Ascending aorta (tissue), 2 donors: ENCODE measurements at regions of chr9 and their contacts with region 1.

Region 1: GRCh38 chr9:122264360-122265148 is at the starts of genes MRRF and RBM18:
- DNase-seq: peak; percentile 66 to 94
- H3K4me3 ChIP-seq: peak within 1 kb of the TSS; percentile 73 to 82
- H3K27ac ChIP-seq: peak within 1 kb of the TSS; percentile 85 to 91
- H3K4me1 ChIP-seq: peaks cover 5 to 24% of the 10 kb centered on the region in 2 donors
- H3K27me3 ChIP-seq: no peaks in the 10 kb centered on the region
- CTCF ChIP-seq: no peak
- total RNA-seq, gene MRRF: 16.1 TPM
- total RNA-seq, gene RBM18: 63.8 TPM

Region 2: GRCh38 chr9:120792898-120793765 is 1471.4 kb before region 1 on chr9 and contains the start of gene FBXW2:
- intact Hi-C with region 1: loop called (anchors 5 kb)
- DNase-seq: peak; percentile 56 to 95
- H3K4me3 ChIP-seq: peak within 1 kb of the TSS; percentile 98 to 99
- H3K27ac ChIP-seq: peak within 1 kb of the TSS; percentile 88 to 95
- H3K4me1 ChIP-seq: peaks cover 7 to 31% of the 10 kb centered on the region in 2 donors
- H3K27me3 ChIP-seq: no peaks in the 10 kb centered on the region
- CTCF ChIP-seq: peak in 1 of 3 experiments; percentile 4
- total RNA-seq, gene FBXW2: 35.5 TPM

Region 3: GRCh38 chr9:122092611-122093506 is 171.7 kb before region 1 on chr9 and contains the start of gene TTLL11:
- intact Hi-C with region 1: loop called (anchors 10 kb)
- DNase-seq: peak; percentile 92 to 99
- H3K4me3 ChIP-seq: peak within 1 kb of the TSS; percentile 92
- H3K27ac ChIP-seq: peak within 1 kb of the TSS; percentile 82 to 92
- H3K4me1 ChIP-seq: peaks cover 5 to 31% of the 10 kb centered on the region in 2 donors
- H3K27me3 ChIP-seq: no peaks in the 10 kb centered on the region
- CTCF ChIP-seq: no peak
- total RNA-seq, gene TTLL11: 18.5 TPM

Region 4: DNA sequence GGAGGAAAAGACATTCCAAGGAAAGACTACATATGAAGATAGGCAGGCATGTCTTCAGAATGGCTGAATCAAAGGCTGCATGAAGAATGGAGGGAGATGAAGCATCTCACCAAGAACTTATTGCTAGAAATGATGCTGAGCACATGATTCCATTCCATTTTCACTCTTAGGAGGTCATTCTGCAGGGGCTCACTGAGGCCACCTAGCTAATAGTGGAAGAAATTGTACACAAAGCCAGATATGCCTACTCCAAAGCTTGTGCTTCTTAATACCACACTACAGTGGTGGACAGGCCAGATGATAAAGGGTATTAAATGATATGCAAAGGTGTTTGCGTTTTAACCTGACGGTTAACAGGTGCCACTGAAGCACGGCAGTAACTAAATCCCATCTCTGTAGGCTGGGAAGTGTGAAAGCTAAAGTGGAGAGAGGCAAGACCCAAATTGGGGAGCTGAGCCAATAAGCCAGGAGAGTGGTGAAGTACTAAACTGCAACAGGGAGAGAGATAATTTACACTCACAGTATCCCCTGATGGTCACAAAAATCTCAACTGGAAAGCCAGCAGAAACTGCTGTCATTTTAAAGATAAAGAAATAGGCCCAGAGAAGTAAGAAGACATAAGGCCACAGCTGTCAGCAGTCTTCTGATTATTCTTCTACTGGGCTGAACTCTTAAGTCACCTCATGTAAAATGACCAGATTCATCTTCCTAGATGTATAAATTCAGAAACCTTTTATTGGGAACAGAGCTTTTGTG is 119.5 kb before region 1 on chr9:
- intact Hi-C with region 1: no loop called
- DNase-seq: no peak
- H3K4me3 ChIP-seq: no peak overlapping the region
- H3K27ac ChIP-seq: no peak overlapping the region
- H3K4me1 ChIP-seq: no peaks in the 10 kb centered on the region
- H3K27me3 ChIP-seq: no peaks in the 10 kb centered on the region
- CTCF ChIP-seq: no peak

Region 5: GRCh38 chr9:122159026-122159924 is 105.3 kb before region 1 on chr9 and contains the starts of genes MORN5 and NDUFA8:
- intact Hi-C with region 1: loop called (anchors 1 kb)
- DNase-seq: peak; percentile 86 to 98
- H3K4me3 ChIP-seq: peak within 1 kb of the TSS; percentile 97
- H3K27ac ChIP-seq: peak within 1 kb of the TSS; percentile 62 to 68
- H3K4me1 ChIP-seq: peaks cover 0 to 11% of the 10 kb centered on the region in 2 donors
- H3K27me3 ChIP-seq: no peaks in the 10 kb centered on the region
- CTCF ChIP-seq: peak in 1 of 3 experiments; percentile 21
- total RNA-seq, gene MORN5: not detected
- total RNA-seq, gene NDUFA8: 21.4 TPM

Region 6: GRCh38 chr9:122281368-122281767 is 16.8 kb after region 1 on chr9:
- intact Hi-C with region 1: no loop called
- DNase-seq: no peak
- H3K4me3 ChIP-seq: no peak overlapping the region
- H3K27ac ChIP-seq: no peak overlapping the region
- H3K4me1 ChIP-seq: no peaks in the 10 kb centered on the region
- H3K27me3 ChIP-seq: no peaks in the 10 kb centered on the region
- CTCF ChIP-seq: no peak

Region 7: DNA sequence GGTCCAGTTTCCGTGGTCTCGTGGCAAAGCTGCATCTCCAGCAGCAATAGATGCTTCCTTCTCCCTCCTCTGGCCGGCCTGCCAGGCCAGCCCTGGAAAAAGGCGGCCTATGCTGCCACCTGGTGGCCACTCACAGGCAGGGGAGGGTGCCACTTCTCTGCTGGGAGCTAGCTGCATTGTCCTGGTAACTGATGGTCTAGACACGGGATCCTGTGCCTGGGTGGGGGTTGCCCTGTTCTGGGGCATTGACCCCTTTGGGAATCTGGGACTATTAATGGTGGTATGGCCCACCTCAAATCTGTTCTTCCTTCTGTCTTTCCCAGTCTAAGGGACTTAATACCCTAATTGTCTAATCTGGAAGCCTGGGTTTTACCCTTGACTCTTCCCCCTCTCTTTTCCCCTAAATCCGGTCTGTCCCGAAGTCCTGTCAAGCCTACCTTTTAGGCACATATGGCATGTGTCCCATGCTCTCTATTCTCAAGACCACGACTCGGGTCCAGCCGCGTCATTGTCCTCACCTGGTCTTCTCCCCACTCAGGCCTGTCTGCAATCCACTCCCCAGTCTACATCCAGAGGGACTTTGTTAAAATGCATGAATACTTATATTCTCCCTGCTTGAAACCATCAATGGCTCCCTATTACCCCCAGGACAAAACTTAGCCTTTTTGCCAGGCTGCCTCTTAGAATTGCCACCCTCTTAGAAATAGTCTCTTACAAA is 86.2 kb after region 1 on chr9:
- intact Hi-C with region 1: loop called (anchors 5 kb)
- DNase-seq: peak in 1 of 2 donors; percentile 89
- H3K4me3 ChIP-seq: no peak overlapping the region
- H3K27ac ChIP-seq: no peak overlapping the region
- H3K4me1 ChIP-seq: peaks cover 0 to 7% of the 10 kb centered on the region in 2 donors
- H3K27me3 ChIP-seq: no peaks in the 10 kb centered on the region
- CTCF ChIP-seq: peak; percentile 89 to 94 (median 94)

Region 8: GRCh38 chr9:122827761-122828093 is 563.2 kb after region 1 on chr9:
- intact Hi-C with region 1: loop called (anchors 10 kb)
- DNase-seq: no peak
- H3K4me3 ChIP-seq: peak overlapping the region; percentile 64 to 92
- H3K27ac ChIP-seq: peak overlapping the region; percentile 93 to 98
- H3K4me1 ChIP-seq: peaks cover 3 to 15% of the 10 kb centered on the region in 2 donors
- H3K27me3 ChIP-seq: no peaks in the 10 kb centered on the region
- CTCF ChIP-seq: no peak

Region 9: DNA sequence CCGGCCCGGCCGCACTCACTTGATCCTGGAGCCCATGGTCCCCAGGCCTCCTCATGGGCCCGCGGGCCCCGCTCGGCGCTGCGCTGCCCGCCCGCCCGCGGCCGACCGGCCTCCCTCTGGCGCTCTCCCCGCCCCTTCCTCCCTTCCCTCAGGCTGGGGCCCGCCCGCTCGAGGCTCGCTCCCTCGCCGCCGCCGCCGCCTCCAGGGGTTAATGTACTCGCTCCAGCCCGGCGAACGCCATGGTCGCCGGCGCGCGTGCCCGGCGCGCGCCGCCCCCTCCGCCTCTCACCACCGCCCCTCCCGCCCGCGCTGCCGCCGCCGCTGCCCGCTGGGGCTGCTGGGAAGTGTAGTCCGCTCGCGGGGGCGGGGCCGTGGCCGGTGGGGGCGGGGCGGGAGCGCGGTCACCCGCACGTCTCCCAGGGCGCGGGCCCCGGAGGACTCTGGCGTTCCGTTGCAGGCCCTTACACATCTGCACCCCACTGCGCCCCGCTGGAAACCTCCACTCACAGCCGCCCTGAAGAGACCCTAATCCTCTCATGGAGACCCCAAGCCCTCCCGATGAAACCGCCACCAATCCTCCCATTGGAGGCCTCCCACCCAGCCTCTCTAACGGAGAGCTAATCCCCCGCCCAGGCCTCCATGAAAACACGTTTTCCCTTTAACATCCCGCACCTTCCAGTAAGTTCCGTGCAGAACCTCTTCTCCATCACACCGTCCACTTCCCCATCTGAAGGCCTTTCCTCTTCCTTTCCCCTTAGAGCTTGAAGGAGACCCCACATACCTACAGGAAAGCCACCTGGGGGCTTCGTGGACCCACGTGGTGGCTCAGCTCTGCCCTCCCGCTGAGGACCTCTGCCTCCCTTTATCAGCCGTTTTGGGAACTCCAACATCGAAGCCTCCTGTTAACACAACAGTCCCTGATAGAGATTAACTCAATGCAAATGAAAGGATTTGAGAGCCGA is 1665.6 kb after region 1 on chr9 and contains the start of gene DENND1A:
- intact Hi-C with region 1: loop called (anchors 10 kb)
- DNase-seq: peak; percentile 72 to 94
- H3K4me3 ChIP-seq: peak within 1 kb of the TSS; percentile 71 to 95
- H3K27ac ChIP-seq: peak within 1 kb of the TSS; percentile 4 to 62
- H3K4me1 ChIP-seq: peaks cover 2 to 6% of the 10 kb centered on the region in 2 donors
- H3K27me3 ChIP-seq: no peaks in the 10 kb centered on the region
- CTCF ChIP-seq: no peak
- total RNA-seq, gene DENND1A: 37.3 TPM